ENCODE measurements at regions of chr5 and their contacts with region 1.

Region 1: GRCh38 chr5:68433923-68434879 is 218.6 kb downstream of the PIK3R1 start:
- DNase-seq: peak; percentile 84
- H3K4me3 Mint-ChIP-seq: peak overlapping the region; percentile 39
- H3K27ac Mint-ChIP-seq: peak overlapping the region; percentile 64
- H3K4me1 Mint-ChIP-seq: peaks cover 45% of the 10 kb centered on the region
- H3K27me3 Mint-ChIP-seq: peaks cover 16% of the 10 kb centered on the region

Region 2: GRCh38 chr5:66840511-66841013 is 1593.6 kb before region 1 on chr5:
- intact Hi-C with region 1: loop called (anchors 5 kb)
- DNase-seq: peak; percentile 46
- H3K4me3 Mint-ChIP-seq: peak overlapping the region; percentile 26
- H3K27ac Mint-ChIP-seq: peak overlapping the region; percentile 79
- H3K4me1 Mint-ChIP-seq: peaks cover 57% of the 10 kb centered on the region
- H3K27me3 Mint-ChIP-seq: no peaks in the 10 kb centered on the region

Region 3: DNA sequence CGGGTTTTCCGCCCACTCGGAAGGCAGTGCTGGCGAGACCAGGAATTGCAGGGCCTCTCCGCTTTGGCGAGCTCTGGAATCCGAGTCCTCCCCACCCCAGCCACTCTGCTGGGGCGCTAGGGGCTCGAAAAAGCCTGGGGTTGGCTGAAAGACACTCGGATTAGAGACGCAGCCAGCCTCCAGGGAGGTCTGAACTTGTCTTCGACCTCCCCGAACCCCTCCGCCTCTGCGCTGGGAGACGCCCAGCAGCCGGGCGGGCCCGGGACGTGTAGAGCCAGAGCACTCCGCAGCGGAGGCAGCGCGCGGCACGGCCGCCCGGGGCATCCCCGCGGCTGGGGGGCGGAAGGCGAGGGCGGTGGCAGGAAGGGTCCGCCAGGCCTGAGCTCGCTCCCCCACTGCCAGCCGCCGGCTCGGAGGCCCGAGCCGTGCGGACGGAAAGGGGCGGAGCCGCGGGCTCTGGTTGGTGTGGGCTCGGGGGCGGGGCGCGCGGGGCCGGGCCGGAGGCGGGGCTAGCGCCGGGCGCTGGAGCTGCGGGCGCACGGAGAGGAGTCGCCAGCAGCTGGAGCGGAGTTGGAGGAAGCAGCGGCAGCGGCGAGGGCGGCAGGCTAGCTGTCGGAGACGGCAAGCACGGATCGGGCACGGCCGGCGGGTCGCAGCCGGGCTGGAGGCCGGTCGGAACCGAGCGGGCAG is 218.8 kb before region 1 on chr5 and contains the start of gene PIK3R1:
- intact Hi-C with region 1: loop called (anchors 1 kb)
- DNase-seq: peak; percentile 89
- H3K4me3 Mint-ChIP-seq: peak within 1 kb of the TSS; percentile 91
- H3K27ac Mint-ChIP-seq: peak within 1 kb of the TSS; percentile 94
- H3K4me1 Mint-ChIP-seq: peaks cover 34% of the 10 kb centered on the region
- H3K27me3 Mint-ChIP-seq: peaks cover 6% of the 10 kb centered on the region
- total RNA-seq, gene PIK3R1: 58.8 and 60.0 TPM in 2 replicates

Region 4: GRCh38 chr5:68303038-68303738 is 131.0 kb before region 1 on chr5:
- intact Hi-C with region 1: loop called (anchors 1 kb)
- DNase-seq: no peak
- H3K4me3 Mint-ChIP-seq: no peak overlapping the region
- H3K27ac Mint-ChIP-seq: peak overlapping the region; percentile 74
- H3K4me1 Mint-ChIP-seq: peaks cover 55% of the 10 kb centered on the region
- H3K27me3 Mint-ChIP-seq: peaks cover 4% of the 10 kb centered on the region

Region 5: DNA sequence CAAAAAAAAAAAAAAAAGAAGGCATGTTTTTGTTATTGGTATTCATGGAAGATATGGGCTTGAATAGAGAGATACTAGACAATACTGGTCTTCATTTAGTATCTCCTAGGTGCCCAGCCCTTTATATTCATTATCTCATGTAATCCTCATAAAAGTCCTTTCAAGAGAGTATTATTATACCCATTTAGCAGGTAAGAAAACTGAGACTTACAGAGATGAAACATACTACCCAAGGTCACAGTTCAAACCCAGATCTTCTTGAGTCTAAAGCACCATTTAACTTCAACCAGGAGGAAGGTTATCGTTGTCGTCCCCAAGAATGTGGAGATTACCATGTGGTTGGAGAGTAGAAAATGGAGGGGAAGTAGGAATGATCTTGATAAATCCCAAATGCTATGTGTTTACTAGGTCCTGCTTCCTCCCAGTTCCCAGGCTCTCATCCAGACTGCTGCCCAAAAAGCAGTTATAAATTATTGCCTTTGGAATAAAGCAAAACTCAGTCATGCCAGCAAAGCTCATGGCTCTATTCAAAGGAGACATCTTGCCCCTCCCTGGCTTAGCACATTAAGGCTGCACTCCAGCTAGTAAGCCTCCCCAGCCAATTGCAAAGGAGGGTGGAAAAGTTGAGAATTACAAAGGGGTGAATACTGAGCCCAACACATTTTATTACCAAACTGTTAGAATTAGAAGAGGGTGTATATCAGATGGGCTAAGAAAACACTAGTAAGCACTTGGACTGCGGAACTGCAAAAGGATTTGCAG is 54.7 kb before region 1 on chr5:
- intact Hi-C with region 1: loop called (anchors 1 kb)
- DNase-seq: no peak
- H3K4me3 Mint-ChIP-seq: no peak overlapping the region
- H3K27ac Mint-ChIP-seq: peak overlapping the region; percentile 61
- H3K4me1 Mint-ChIP-seq: peaks cover 70% of the 10 kb centered on the region
- H3K27me3 Mint-ChIP-seq: peaks cover 2% of the 10 kb centered on the region

Region 6: GRCh38 chr5:68891718-68892117 is 457.5 kb after region 1 on chr5:
- intact Hi-C with region 1: loop called (anchors 5 kb)
- DNase-seq: peak; percentile 48
- H3K4me3 Mint-ChIP-seq: no peak overlapping the region
- H3K27ac Mint-ChIP-seq: peak overlapping the region; percentile 39
- H3K4me1 Mint-ChIP-seq: peaks cover 65% of the 10 kb centered on the region
- H3K27me3 Mint-ChIP-seq: no peaks in the 10 kb centered on the region

Measured in activated T-helper 2 cell treated with anti-CD3 and anti-CD28 coated beads, Interferon-gamma antibody, Interleukin-2, Interleukin-4, amounts not matched to agents 10 μg/mL and 5 μg/mL and 100 μg/mL, durations not matched to agents 14 hours and 24 hours and 36 hours (primary cell).